ENCODE measurements at regions of chr9 and their contacts with region 1.

Region 1: GRCh38 chr9:33159760-33160127 is 7.4 kb downstream of the B4GALT1 start:
- DNase-seq: peak; percentile 86
- H3K4me3 Mint-ChIP-seq: peak overlapping the region; percentile 77
- H3K27ac Mint-ChIP-seq: peak overlapping the region; percentile 96
- H3K4me1 Mint-ChIP-seq: peaks cover 83% of the 10 kb centered on the region
- H3K27me3 Mint-ChIP-seq: no peaks in the 10 kb centered on the region

Region 2: DNA sequence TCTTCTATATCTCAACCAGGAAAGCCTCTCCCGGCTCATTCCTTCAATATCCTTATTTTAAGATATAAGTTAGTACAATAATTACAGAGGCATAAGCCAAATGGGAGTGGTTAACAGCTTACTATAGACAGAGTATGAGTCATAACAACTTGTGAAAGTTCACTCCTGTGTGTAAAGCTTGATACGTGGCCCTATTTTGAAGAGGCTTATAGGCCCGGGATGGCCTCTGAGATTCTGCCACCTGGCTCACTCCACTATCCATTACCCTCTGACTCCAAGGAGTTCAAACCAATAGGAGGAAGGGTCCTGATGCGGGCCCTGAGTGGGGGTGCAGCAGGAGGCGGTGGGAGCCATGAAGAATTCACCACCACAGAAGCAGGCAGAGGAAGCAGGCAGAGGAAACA is 29.2 kb before region 1 on chr9:
- intact Hi-C with region 1: loop called (anchors 2 kb)
- DNase-seq: peak; percentile 65
- H3K4me3 Mint-ChIP-seq: peak overlapping the region; percentile 68
- H3K27ac Mint-ChIP-seq: peak overlapping the region; percentile 92
- H3K4me1 Mint-ChIP-seq: peaks cover 30% of the 10 kb centered on the region
- H3K27me3 Mint-ChIP-seq: no peaks in the 10 kb centered on the region

Region 3: GRCh38 chr9:33143241-33143661 is 16.5 kb before region 1 on chr9:
- intact Hi-C with region 1: loop called (anchors 2 kb)
- DNase-seq: no peak
- H3K4me3 Mint-ChIP-seq: peak overlapping the region; percentile 29
- H3K27ac Mint-ChIP-seq: peak overlapping the region; percentile 64
- H3K4me1 Mint-ChIP-seq: peaks cover 59% of the 10 kb centered on the region
- H3K27me3 Mint-ChIP-seq: no peaks in the 10 kb centered on the region